HEK293T (cell line): ENCODE measurements at regions of chr4 and their contacts with region 1.

Region 1: GRCh38 chr4:26161030-26161824 is 159.6 kb upstream of the RBPJ start:
- DNase-seq: peak; percentile 26

Region 2: GRCh38 chr4:26081795-26082498 is 79.3 kb before region 1 on chr4:
- CTCF ChIA-PET with region 1: interaction called, 14 read pairs
- POLR2A ChIA-PET with region 1: no interaction called
- DNase-seq: peak; percentile 23

Region 3: DNA sequence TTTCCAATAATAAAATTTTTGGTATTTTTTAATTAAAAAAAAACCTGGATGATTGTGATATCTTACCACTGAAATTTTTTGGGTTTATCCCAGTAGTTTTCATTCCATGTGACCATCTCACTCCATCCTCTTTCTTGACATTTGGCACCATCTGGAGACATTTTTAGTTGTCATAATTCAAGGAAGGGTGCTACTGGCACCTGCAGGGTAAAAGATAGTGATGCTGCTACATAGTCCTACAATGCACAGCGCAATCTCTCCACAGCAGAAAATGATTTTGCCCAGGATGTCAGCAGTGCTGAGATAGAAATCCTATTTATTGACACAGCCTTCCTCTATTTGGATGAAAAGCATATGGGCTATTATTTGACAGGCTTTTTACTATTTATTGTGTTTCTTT is 238.9 kb after region 1 on chr4:
- CTCF ChIA-PET with region 1: no interaction called
- POLR2A ChIA-PET with region 1: no interaction called
- DNase-seq: no peak